Psoas muscle (tissue), 8 donors: ENCODE measurements at regions of chr2 and their contacts with region 1.

Region 1: DNA sequence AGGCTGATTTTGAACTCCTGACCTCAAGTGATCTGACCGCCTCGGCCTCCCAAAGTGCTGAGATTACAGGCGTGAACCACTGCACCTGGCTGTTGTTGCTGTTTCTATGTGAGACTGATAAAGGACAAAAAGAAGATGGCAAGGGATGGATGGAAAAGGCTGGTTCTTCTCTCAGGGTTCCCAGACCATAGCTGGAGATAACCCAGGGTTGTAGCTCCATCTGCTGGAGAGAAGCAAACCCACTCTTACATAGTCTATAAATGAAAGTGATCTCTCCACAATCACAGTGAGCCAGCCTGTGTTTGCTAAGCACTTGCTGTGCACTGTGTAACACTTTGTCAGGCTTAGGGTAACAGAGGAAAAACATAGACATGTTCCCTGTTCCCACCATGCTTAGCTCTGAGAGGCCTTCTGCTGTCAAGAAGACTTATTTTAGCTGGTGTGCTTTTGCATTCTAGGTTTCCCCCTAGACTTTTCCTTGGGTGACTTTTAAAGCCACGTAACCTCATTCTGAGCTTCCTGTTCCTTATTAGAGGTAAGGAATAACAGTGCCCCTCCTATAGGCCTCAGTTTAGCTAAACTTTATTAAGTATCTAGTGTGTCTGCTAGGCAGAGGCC is 49.7 kb downstream of the LIMS1 start:
- DNase-seq: peak; percentile 29 to 48
- ATAC-seq: peak; percentile 71 to 80 (median 76)
- H3K4me3 ChIP-seq: no peak overlapping the region
- H3K27ac ChIP-seq: peak overlapping the region; percentile 24
- H3K4me1 ChIP-seq: peaks cover 49% of the 10 kb centered on the region
- H3K27me3 ChIP-seq: no peaks in the 10 kb centered on the region
- CTCF ChIP-seq: peak; percentile 85

Region 2: DNA sequence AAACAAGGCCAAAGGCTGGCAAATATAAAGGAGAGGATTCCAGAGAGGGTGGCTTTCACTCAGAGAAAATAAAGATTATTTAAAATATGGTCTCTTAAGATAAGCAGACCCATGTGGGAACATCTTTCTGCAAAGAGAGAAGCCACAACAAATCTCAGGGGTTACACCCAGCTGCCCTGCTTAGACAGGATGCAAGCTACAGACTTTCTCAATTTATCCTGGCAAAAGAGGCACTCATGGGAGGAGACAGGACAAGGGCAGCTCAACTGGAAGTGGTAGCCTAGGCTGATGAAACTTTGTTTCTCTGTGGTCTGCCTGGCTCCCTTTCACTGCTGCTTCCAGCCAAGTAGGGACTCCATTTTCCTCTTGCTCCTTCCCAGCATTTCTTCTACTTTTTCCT is 232.1 kb before region 1 on chr2:
- intact Hi-C with region 1: loop called (anchors 5 kb)
- DNase-seq: no peak
- ATAC-seq: no peak
- H3K4me3 ChIP-seq: no peak overlapping the region
- H3K27ac ChIP-seq: no peak overlapping the region
- H3K4me1 ChIP-seq: no peaks in the 10 kb centered on the region
- H3K27me3 ChIP-seq: peaks cover 0 to 2% (median under 1%) of the 10 kb centered on the region in 3 donors
- CTCF ChIP-seq: no peak

Region 3: DNA sequence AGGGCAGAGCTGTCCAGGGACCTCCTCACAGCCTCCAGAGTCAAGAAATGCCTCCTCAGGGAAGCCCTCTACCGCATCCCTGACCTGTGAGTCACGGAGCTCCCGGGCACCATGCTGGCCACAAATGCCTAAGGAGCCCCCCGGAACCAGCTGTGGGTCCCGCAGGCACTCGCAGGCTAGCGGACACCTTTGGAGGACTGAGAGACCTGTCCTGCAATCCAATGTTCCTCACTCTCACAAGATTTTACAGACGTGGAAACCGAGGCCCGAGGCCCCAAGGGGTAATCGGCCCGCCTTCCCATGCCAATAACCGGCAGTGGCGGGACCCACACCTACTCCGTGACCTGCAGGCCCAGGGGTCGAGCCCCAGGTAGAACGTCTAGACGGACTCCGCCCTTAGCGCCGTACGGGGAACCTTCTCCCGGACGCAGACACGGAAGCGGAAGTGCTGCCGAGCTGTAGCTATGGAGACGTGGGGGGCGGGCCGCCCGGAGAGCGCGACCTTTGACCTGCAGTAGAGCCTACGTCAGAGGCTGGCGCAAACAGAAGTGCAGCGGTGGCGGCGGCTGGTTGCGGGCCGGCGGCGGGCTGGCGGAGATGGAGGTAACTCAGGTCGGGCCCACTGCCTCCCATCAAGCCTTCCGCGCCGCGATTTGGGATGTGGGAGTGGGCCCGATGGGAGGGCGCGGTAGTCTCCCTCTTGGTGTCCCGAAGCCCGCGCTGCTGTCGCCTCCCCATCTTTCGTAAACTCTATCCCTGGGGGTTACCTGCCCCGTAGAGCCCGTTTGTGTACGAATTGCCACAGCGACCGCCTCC is 135.1 kb before region 1 on chr2 and contains the start of gene GCC2:
- intact Hi-C with region 1: loop called (anchors 5 to 10 kb)
- DNase-seq: peak; percentile 94 to 97
- ATAC-seq: peak; percentile 100
- H3K4me3 ChIP-seq: peak within 1 kb of the TSS; percentile 95
- H3K27ac ChIP-seq: peak within 1 kb of the TSS; percentile 81
- H3K4me1 ChIP-seq: peaks cover 4% of the 10 kb centered on the region
- H3K27me3 ChIP-seq: no peaks in the 10 kb centered on the region
- CTCF ChIP-seq: no peak
- total RNA-seq, gene GCC2: 18.0 to 24.0 (median 21.5) TPM

Region 4: DNA sequence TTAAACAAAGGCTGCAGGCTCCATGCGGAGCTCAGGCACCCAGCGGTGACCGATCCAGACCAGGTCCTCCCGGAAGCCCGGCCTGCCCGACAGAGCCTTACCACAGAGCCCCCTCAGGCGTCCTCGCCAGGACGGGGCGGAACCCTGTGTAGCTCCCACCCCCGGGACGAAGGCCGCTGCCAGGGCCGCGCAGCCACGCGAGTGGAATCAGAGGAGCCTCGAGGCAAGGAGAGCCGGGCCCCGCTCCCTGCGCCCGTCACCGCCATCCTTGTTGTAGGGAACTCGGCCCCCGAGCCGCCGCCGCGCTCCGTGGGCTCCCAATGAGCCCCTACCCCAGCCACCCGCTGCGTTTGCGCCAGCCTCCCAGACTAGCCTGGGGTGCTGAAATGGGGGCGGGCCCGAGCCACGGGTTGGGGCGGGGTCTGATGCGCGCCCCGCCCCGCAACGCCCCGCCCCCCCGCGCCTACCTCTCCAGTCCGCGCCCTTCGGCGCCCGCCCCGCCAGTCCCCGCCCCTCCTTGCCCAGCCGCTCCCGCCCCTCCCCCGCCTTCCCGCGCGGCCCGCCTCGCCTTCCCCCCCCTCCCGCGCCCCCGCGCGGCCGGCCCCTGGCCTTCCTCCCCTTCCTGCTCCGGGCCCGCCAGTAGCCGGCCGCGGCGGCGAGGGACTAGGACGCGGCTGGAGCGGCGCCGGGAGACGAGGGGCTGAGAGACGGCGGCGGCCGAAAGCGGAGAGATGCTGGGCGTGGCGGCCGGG is 50.0 kb before region 1 on chr2 and contains the start of gene LIMS1:
- intact Hi-C with region 1: loop called in 1 of 2 experiments (anchors 2 kb)
- DNase-seq: peak; percentile 94 to 96
- ATAC-seq: peak; percentile 94 to 96 (median 95)
- H3K4me3 ChIP-seq: peak within 1 kb of the TSS; percentile 82
- H3K27ac ChIP-seq: peak within 1 kb of the TSS; percentile 96
- H3K4me1 ChIP-seq: peaks cover 21% of the 10 kb centered on the region
- H3K27me3 ChIP-seq: no peaks in the 10 kb centered on the region
- CTCF ChIP-seq: no peak
- total RNA-seq, gene LIMS1: 55.1 to 219 (median 182) TPM

Region 5: GRCh38 chr2:108637304-108637669 is 53.3 kb after region 1 on chr2:
- intact Hi-C with region 1: loop called in 1 of 2 experiments (anchors 5 kb)
- DNase-seq: peak; percentile 41 to 77
- ATAC-seq: peak; percentile 89 to 93 (median 92)
- H3K4me3 ChIP-seq: no peak overlapping the region
- H3K27ac ChIP-seq: peak overlapping the region; percentile 90
- H3K4me1 ChIP-seq: peaks cover 78% of the 10 kb centered on the region
- H3K27me3 ChIP-seq: no peaks in the 10 kb centered on the region
- CTCF ChIP-seq: no peak

Region 6: DNA sequence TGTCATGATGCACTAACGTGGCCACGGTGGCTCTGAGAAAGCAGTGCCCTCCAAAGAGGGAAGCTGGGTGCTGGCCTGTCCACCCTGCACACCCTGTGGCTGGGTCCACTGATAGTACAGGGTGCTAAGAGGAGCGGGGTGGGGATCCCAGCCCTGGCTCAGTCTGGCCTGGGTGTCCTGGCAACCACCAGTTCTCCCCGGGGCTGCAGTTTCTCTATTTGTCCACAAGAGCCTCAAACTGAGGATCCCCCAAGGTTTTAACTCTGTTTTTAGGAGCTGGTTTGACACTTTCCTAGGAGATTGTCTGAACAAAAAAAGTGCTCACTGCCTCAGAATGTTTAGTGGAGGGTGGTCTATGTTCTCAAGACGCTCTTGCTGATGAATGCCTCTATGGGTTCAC is 376.0 kb after region 1 on chr2:
- intact Hi-C with region 1: no loop called
- DNase-seq: no peak
- ATAC-seq: no peak
- H3K4me3 ChIP-seq: no peak overlapping the region
- H3K27ac ChIP-seq: no peak overlapping the region
- H3K4me1 ChIP-seq: no peaks in the 10 kb centered on the region
- H3K27me3 ChIP-seq: no peaks in the 10 kb centered on the region
- CTCF ChIP-seq: no peak